ENCODE measurements at regions of chr19 and their contacts with region 1.

Region 1: GRCh38 chr19:44071824-44072542 is at the start of gene ZNF284:
- DNase-seq: peak; percentile 80 to 91
- ATAC-seq: peak; percentile 97 to 100 (median 100)
- H3K4me3 ChIP-seq: peak within 1 kb of the TSS; percentile 48 to 76 (median 69)
- H3K27ac ChIP-seq: peak within 1 kb of the TSS in 8 of 10 donors; percentile 51 to 72 (median 63)
- H3K4me1 ChIP-seq: peaks cover 0 to 21% (median 15%) of the 10 kb centered on the region in 9 donors
- H3K27me3 ChIP-seq: no peaks in the 10 kb centered on the region
- CTCF ChIP-seq: no peak
- total RNA-seq, gene ZNF284: 1.2 to 2.6 (median 1.8) TPM

Region 2: DNA sequence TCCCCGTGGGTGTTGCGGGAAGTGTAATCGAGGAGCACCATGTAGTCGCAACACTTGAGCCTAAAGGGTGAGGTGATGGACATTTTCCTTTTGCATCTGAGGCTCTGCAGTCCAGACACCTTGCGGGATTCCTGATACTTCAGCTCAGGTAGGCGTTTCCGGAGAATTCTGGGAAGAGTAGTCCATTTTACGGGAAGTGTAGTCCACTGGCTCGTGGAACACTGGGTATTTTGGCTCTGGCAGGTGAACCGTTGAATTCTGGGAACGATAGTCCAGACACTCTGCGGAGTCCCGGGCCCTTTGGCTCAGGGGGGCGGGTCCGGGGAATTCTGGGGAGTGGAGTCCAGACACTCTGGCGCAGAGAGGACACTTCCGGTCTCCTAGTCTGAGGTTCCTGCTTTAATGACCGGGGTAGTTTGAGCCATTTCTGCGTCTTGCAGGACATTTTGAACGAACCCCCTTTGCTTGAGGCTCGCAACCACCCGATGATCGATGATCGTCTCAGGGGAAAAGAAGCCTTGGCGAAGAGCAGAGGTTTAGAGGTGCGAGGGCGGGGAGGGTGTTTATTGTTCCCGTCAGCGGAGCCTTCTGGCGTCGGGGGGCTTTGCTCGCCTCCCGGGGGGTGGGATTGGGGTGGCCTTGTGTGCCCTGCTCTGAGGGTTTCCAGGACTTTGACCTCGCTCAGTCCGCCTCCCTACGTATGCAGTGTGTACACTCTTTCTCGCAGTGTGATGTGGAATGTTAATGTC is 20.2 kb before region 1 on chr19 and contains the start of gene ZNF223:
- intact Hi-C with region 1: loop called in 1 of 10 experiments (anchors 2 kb)
- DNase-seq: peak; percentile 92 to 97
- ATAC-seq: peak; percentile 100
- H3K4me3 ChIP-seq: peak within 1 kb of the TSS; percentile 52 to 81 (median 71)
- H3K27ac ChIP-seq: peak within 1 kb of the TSS in 9 of 10 donors; percentile 49 to 82 (median 64)
- H3K4me1 ChIP-seq: peaks cover 3 to 21% (median 12%) of the 10 kb centered on the region in 9 donors
- H3K27me3 ChIP-seq: peaks cover 0 to 37% (median 18%) of the 10 kb centered on the region in 7 donors
- CTCF ChIP-seq: no peak
- total RNA-seq, gene ZNF223: 2.3 to 5.4 (median 3.2) TPM

Region 3: DNA sequence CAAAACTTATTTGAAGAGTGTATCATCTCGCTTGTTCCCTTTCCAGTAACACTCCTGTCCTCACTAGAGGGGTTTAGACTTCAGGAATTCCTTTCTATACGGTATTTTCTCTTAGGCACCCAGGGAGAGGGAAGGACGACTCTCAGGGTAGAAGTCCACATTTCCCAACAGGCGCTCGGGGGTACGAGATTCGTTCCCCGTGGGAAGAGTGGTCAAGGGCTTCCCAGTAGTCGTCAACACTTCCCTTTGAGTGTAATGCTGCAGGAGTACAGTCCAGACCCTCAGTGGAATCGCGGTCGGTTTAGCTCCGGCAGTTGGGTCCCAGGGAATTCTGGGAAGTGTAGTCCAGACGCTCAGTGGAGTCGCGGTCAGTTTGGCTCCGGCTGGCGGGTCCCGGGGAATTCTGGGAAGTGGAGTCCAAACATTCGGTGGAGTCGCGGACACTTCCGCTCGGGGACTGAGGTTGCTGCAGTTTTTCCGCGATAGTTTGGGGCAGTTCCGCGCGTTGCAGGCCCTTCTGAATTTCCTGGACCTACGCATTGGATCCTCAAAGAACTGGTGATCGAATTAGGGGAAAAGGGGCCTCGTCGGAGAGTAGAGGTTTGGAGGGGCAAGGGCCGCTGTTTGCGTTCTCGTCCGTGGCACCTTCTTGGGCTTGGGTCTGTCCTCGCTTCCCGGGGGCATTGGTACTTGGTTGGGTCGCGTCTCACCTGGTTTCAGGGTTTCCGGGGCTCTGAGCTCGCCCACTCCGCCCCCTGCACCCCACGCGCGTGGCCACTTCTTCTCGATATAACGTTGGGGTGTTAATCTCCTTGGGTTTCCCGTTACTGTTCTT is 22.2 kb after region 1 on chr19 and contains the start of gene ZNF224:
- intact Hi-C with region 1: loop called in 2 of 10 experiments (anchors 2 kb)
- DNase-seq: peak; percentile 87 to 95
- ATAC-seq: peak; percentile 98 to 100 (median 99)
- H3K4me3 ChIP-seq: peak within 1 kb of the TSS; percentile 74 to 94 (median 84)
- H3K27ac ChIP-seq: peak within 1 kb of the TSS; percentile 38 to 91 (median 80)
- H3K4me1 ChIP-seq: peaks cover 3 to 21% (median 12%) of the 10 kb centered on the region in 9 donors
- H3K27me3 ChIP-seq: no peaks in the 10 kb centered on the region
- CTCF ChIP-seq: no peak
- total RNA-seq, gene ZNF224: 8.1 to 16.0 (median 13.3) TPM

Measured in heart right ventricle (tissue), 16 donors.